ENCODE measurements at regions of chr11 and their contacts with region 1.

Region 1: GRCh38 chr11:14892036-14892567 is at the start of gene CYP2R1:
- DNase-seq: peak; percentile 88
- H3K4me3 ChIP-seq: peak within 1 kb of the TSS; percentile 58
- H3K27me3 ChIP-seq: no peaks in the 10 kb centered on the region; the same call in 1 of the 2 replicates
- CTCF ChIP-seq: no peak
- polyA plus RNA-seq, gene CYP2R1: 7.3 and 14.0 TPM in 2 replicates

Region 2: DNA sequence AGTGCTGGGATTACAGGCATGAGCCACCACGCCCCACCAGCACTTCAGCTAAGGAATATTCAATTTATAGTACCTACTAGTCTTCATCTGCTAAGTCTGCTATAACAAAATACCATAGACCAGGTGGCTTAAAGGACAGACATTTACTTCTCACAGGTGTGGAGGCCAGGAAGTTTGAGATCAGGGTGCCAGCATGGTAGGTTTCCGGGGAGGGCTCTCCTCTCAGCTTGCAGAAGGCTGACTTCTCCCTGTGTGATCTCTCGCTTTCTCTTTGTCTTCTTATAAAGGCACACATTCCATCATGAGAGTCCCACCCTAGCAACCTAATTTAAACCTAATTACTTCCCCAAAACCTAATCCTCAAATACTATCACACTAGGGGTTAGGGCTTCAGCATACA is 655.6 kb after region 1 on chr11:
- CTCF ChIA-PET with region 1: no interaction called
- POLR2A ChIA-PET with region 1: interaction called, 12 read pairs
- DNase-seq: no peak
- H3K4me3 ChIP-seq: no peak overlapping the region
- H3K27me3 ChIP-seq: no peaks in the 10 kb centered on the region
- CTCF ChIP-seq: no peak